ENCODE measurements at regions of chr20 and their contacts with region 1.

Region 1: DNA sequence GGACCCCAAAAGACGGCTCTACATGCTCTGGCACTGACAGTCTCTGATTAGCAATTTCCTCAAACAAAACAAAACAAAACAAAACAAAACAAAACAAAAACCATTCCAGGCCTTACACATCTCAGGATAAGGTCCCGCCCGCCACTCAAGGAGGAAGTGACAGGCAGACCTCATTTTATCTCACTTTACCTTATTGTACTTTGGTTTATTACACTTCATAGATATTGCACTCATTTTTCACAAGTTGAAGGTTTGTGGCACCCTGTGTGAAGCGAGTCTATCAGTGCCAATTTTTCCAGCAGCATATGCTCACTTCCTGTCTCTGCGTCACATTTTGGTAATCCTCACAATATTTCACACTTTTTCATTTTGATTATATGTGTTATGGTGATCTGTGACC is 15.2 kb downstream of the ZBP1 start:
- DNase-seq: peak; percentile 58 to 80
- ATAC-seq: peak; percentile 84 to 93 (median 91)
- H3K4me3 ChIP-seq: no peak overlapping the region
- H3K4me3 Mint-ChIP-seq: peak overlapping the region; percentile 86
- H3K27ac ChIP-seq: peak overlapping the region; percentile 80
- H3K27ac Mint-ChIP-seq: peak overlapping the region; percentile 87 to 97
- H3K4me1 ChIP-seq: peaks cover 35% of the 10 kb centered on the region
- H3K4me1 Mint-ChIP-seq: peaks cover 46 to 57% of the 10 kb centered on the region in 2 donors
- H3K27me3 ChIP-seq: no peaks in the 10 kb centered on the region
- H3K27me3 Mint-ChIP-seq: no peaks in the 10 kb centered on the region
- CTCF ChIP-seq: no peak

Region 2: GRCh38 chr20:57620274-57620990 is 15.4 kb after region 1 on chr20 and contains the start of gene ZBP1:
- intact Hi-C with region 1: loop called (anchors 1 kb)
- DNase-seq: peak; percentile 62 to 83
- ATAC-seq: peak; percentile 64 to 75 (median 64)
- H3K4me3 ChIP-seq: peak within 1 kb of the TSS; percentile 45
- H3K4me3 Mint-ChIP-seq: peak within 1 kb of the TSS; percentile 90
- H3K27ac ChIP-seq: peak within 1 kb of the TSS; percentile 95
- H3K27ac Mint-ChIP-seq: peak within 1 kb of the TSS; percentile 96 to 97
- H3K4me1 ChIP-seq: peaks cover 74% of the 10 kb centered on the region
- H3K4me1 Mint-ChIP-seq: peaks cover 54 to 55% of the 10 kb centered on the region in 2 donors
- H3K27me3 ChIP-seq: no peaks in the 10 kb centered on the region
- H3K27me3 Mint-ChIP-seq: no peaks in the 10 kb centered on the region
- CTCF ChIP-seq: no peak
- total RNA-seq, gene ZBP1: 95.4 to 99.7 (median 97.8) TPM

Region 3: GRCh38 chr20:57628047-57628961 is 23.3 kb after region 1 on chr20:
- intact Hi-C with region 1: loop called (anchors 1 kb)
- DNase-seq: peak; percentile 49 to 90
- ATAC-seq: peak; percentile 83 to 91 (median 84)
- H3K4me3 ChIP-seq: peak overlapping the region; percentile 7
- H3K4me3 Mint-ChIP-seq: peak overlapping the region; percentile 88
- H3K27ac ChIP-seq: peak overlapping the region; percentile 97
- H3K27ac Mint-ChIP-seq: peak overlapping the region; percentile 96 to 99
- H3K4me1 ChIP-seq: peaks cover 40% of the 10 kb centered on the region
- H3K4me1 Mint-ChIP-seq: peaks cover 47 to 53% of the 10 kb centered on the region in 2 donors
- H3K27me3 ChIP-seq: no peaks in the 10 kb centered on the region
- H3K27me3 Mint-ChIP-seq: peaks cover 0 to 3% of the 10 kb centered on the region in 2 donors
- CTCF ChIP-seq: no peak

Region 4: GRCh38 chr20:57680131-57680716 is 75.2 kb after region 1 on chr20:
- intact Hi-C with region 1: loop called (anchors 2 kb)
- DNase-seq: peak; percentile 26 to 36
- ATAC-seq: peak; percentile 66 to 75 (median 71)
- H3K4me3 ChIP-seq: no peak overlapping the region
- H3K4me3 Mint-ChIP-seq: no peak overlapping the region
- H3K27ac ChIP-seq: peak overlapping the region; percentile 78
- H3K27ac Mint-ChIP-seq: peak overlapping the region in 1 of 2 donors; percentile 78
- H3K4me1 ChIP-seq: peaks cover 48% of the 10 kb centered on the region
- H3K4me1 Mint-ChIP-seq: peaks cover 19 to 36% of the 10 kb centered on the region in 2 donors
- H3K27me3 ChIP-seq: no peaks in the 10 kb centered on the region
- H3K27me3 Mint-ChIP-seq: peaks cover 26 to 46% of the 10 kb centered on the region in 2 donors
- CTCF ChIP-seq: no peak

Region 5: GRCh38 chr20:57718490-57719271 is 113.6 kb after region 1 on chr20:
- intact Hi-C with region 1: loop called (anchors 2 kb)
- DNase-seq: peak; percentile 89 to 95
- ATAC-seq: peak; percentile 98 to 99 (median 99)
- H3K4me3 ChIP-seq: peak overlapping the region; percentile 5
- H3K4me3 Mint-ChIP-seq: peak overlapping the region; percentile 60
- H3K27ac ChIP-seq: peak overlapping the region; percentile 4
- H3K27ac Mint-ChIP-seq: peak overlapping the region; percentile 68 to 86
- H3K4me1 ChIP-seq: peaks cover 12% of the 10 kb centered on the region
- H3K4me1 Mint-ChIP-seq: peaks cover 5 to 8% of the 10 kb centered on the region in 2 donors
- H3K27me3 ChIP-seq: no peaks in the 10 kb centered on the region
- H3K27me3 Mint-ChIP-seq: peaks cover 16 to 36% of the 10 kb centered on the region in 2 donors
- CTCF ChIP-seq: no peak